Heart right ventricle (tissue), 16 donors: ENCODE measurements at regions of chr6 and their contacts with region 1.

Region 1: DNA sequence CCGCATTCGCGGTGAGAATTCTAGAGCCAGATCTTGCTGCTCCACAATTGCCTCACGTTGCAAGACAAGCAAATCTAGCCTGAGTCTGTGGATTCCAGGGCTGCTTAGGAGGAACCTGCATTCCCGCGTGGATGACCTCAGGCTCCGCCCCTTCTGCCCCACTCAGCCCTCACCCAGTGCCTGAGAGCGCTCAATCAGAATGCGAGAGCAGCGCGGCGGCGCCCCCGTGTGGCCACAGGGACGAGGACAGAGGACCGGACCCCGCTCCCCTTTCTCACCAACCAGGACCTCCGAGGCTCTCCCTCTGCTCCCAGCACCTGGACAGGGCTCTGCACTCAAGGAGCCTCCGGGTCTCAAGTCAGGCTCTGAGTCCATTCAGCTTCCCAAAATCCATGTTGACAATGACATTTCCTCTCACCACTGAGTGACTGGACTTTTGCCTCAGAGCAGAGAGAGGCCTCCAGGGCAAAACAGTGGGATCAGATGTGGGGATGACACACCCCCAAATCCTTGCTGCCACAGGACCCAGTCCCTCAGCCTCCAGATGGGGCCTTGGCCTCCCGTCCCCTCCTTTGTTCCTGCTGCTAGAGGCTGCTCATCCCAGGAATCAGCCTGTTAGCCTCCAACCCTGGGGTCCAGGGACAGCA is 52.0 kb downstream of the RPP21 start:
- DNase-seq: peak; percentile 65 to 85
- ATAC-seq: peak; percentile 90 to 97 (median 92)
- H3K4me3 ChIP-seq: no peak overlapping the region
- H3K27ac ChIP-seq: no peak overlapping the region
- H3K4me1 ChIP-seq: peaks cover 0 to 6% (median 0%) of the 10 kb centered on the region in 9 donors
- H3K27me3 ChIP-seq: peaks cover 0 to 65% (median 44%) of the 10 kb centered on the region in 7 donors
- CTCF ChIP-seq: peak; percentile 38 to 90 (median 79)

Region 2: DNA sequence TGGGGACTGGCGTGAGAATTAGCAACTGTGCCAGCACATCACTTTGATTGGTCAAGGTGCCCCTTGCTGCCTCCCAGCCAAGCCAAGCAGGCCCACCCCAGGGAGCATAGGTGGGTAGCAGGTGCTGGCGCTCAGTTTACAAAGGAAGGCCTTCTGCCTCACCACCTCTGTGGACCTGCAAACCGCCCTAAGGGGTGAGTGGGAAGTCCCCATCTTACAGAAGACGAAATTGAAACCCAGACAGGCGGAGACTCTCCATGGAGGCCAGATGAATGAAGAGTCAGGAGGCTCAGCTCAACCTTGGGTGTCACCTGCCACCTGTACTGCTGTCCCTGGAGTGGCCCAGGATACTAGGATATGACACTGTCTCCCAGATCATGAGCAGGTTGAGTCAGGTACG is 887.7 kb before region 1 on chr6:
- intact Hi-C with region 1: no loop called
- DNase-seq: no peak
- ATAC-seq: no peak
- H3K4me3 ChIP-seq: no peak overlapping the region
- H3K27ac ChIP-seq: no peak overlapping the region
- H3K4me1 ChIP-seq: no peaks in the 10 kb centered on the region
- H3K27me3 ChIP-seq: peaks cover 0 to 16% (median 4%) of the 10 kb centered on the region in 7 donors
- CTCF ChIP-seq: no peak

Region 3: GRCh38 chr6:30219244-30219643 is 177.7 kb before region 1 on chr6:
- intact Hi-C with region 1: loop called in 8 of 10 experiments (anchors 2 to 10 kb)
- DNase-seq: peak in 1 of 2 donors; percentile 30
- ATAC-seq: peak in 4 of 8 donors; percentile 30 to 59 (median 47)
- H3K4me3 ChIP-seq: no peak overlapping the region
- H3K27ac ChIP-seq: no peak overlapping the region
- H3K4me1 ChIP-seq: peaks cover 0 to 15% (median 0%) of the 10 kb centered on the region in 9 donors
- H3K27me3 ChIP-seq: no peaks in the 10 kb centered on the region
- CTCF ChIP-seq: peak; percentile 52 to 91 (median 82)

Region 4: DNA sequence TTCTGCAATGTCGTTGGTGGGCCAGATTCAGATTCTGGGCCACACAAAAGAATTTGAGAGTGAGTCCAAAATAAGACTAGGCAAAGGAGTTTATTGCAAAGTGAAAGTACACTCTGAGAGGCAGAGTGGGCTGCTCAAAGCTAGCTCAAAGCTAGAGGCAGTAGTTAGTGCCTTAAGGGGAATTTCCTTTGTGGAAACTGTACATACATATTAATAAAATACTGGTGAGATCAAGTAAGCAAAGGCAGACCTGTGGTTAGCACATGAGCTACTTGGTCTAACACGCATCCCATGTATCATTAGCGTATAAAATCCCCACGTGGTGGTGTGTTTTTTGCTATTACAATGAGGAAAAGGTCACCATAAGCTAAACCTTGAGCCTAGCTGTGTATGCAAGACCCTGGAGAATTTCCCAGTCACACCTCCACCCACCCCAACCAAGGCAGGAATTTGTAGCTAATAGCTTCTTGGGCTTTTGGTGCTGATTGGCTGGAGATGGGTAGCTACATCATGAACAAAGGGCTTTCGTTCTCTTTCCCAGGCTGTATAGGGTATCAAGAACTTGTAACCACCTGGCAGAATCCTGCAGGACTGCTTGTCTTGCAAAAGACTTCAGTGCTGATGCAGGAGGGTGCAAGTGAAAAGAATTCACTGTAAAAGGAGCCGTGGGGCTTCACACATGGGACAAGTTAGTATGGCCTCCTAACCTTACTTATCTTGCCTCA is 169.0 kb before region 1 on chr6:
- intact Hi-C with region 1: loop called in 2 of 10 experiments (anchors 5 to 10 kb)
- DNase-seq: no peak
- ATAC-seq: no peak
- H3K4me3 ChIP-seq: no peak overlapping the region
- H3K27ac ChIP-seq: no peak overlapping the region
- H3K4me1 ChIP-seq: no peaks in the 10 kb centered on the region
- H3K27me3 ChIP-seq: peaks cover 0 to 6% (median 0%) of the 10 kb centered on the region in 7 donors
- CTCF ChIP-seq: no peak

Region 5: DNA sequence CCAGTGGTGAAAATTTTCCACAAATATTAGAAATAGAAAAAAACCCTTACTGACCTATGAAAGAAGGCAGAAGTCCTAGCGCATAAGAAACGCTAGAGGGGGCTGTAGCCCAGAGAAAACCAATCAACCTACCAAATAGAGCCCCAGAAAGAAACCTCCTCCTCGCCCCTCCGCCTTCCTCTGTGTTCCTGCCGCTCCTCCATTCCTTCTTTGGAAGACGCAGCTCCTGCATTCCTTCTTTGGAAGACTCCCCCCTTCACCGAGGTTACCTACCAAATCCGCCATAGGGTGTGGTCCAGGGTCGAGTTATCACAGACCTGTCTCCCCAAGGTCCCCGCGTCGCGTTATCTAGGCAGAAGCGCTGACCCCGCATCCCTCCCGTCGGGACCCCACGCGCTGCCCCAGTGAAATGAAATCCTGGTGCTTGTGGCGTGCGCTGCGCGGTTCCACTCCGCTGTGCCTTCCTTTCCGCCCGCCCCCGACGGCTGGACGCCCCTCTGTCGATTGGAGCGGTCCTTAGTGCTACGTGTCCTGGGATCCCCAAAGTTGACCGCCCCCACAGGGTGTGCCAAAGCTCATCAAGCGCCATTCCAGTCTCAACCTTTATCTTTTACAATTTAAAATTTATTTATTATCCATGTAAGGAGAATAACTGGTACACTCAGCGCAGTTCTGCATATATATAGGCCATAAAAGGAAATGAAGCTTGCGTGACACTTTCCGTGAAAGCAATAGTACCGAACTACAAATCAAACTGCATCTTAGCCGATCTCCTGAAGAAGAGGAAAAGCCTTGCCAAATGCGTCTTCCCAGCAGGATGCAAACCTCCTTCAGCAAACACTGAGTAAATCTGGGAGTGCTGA is 39.0 kb before region 1 on chr6:
- intact Hi-C with region 1: loop called in 4 of 10 experiments (anchors 2 to 5 kb)
- DNase-seq: peak in 1 of 2 donors; percentile 31
- ATAC-seq: peak in 6 of 8 donors; percentile 42 to 63 (median 56)
- H3K4me3 ChIP-seq: peak overlapping the region in 8 of 10 donors; percentile 19 to 36 (median 30)
- H3K27ac ChIP-seq: no peak overlapping the region
- H3K4me1 ChIP-seq: peaks cover 0 to 8% (median 4%) of the 10 kb centered on the region in 9 donors
- H3K27me3 ChIP-seq: peaks cover 0 to 98% (median 51%) of the 10 kb centered on the region in 7 donors
- CTCF ChIP-seq: peak; percentile 48 to 83 (median 71)

Region 6: DNA sequence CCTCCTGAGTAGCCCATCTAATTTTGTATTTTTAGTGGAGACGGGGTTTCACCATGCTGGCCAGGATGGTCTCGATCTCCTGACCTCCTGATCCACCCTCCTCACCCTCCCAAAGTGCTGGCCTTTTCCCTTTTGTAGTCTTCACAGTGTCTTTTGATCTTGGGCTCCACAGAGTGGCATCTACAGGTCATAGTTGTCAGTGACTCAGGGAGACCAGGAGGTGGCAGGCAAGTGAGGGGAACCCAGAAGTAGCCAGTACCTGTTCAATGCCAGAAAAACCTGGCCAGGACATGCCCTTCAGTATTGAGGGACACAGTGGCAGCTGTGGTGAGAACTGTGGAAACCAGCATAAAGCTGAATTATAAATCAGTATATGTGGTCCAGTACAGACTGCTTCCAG is 32.4 kb before region 1 on chr6:
- intact Hi-C with region 1: loop called in 3 of 10 experiments (anchors 5 kb)
- DNase-seq: no peak
- ATAC-seq: no peak
- H3K4me3 ChIP-seq: no peak overlapping the region
- H3K27ac ChIP-seq: no peak overlapping the region
- H3K4me1 ChIP-seq: no peaks in the 10 kb centered on the region
- H3K27me3 ChIP-seq: peaks cover 0 to 96% (median 67%) of the 10 kb centered on the region in 7 donors
- CTCF ChIP-seq: no peak

Region 7: GRCh38 chr6:30541515-30542403 is 144.8 kb after region 1 on chr6:
- intact Hi-C with region 1: no loop called
- DNase-seq: peak; percentile 63 to 73
- ATAC-seq: peak; percentile 57 to 84 (median 78)
- H3K4me3 ChIP-seq: peak overlapping the region in 9 of 10 donors; percentile 14 to 52 (median 41)
- H3K27ac ChIP-seq: peak overlapping the region; percentile 13 to 71 (median 64)
- H3K4me1 ChIP-seq: peaks cover 3 to 27% (median 17%) of the 10 kb centered on the region in 9 donors
- H3K27me3 ChIP-seq: peaks cover 0 to 7% (median 0%) of the 10 kb centered on the region in 7 donors
- CTCF ChIP-seq: peak; percentile 93 to 99 (median 99)